H1 (cell line): ENCODE measurements at regions of chr7 and their contacts with region 1.

Region 1: DNA sequence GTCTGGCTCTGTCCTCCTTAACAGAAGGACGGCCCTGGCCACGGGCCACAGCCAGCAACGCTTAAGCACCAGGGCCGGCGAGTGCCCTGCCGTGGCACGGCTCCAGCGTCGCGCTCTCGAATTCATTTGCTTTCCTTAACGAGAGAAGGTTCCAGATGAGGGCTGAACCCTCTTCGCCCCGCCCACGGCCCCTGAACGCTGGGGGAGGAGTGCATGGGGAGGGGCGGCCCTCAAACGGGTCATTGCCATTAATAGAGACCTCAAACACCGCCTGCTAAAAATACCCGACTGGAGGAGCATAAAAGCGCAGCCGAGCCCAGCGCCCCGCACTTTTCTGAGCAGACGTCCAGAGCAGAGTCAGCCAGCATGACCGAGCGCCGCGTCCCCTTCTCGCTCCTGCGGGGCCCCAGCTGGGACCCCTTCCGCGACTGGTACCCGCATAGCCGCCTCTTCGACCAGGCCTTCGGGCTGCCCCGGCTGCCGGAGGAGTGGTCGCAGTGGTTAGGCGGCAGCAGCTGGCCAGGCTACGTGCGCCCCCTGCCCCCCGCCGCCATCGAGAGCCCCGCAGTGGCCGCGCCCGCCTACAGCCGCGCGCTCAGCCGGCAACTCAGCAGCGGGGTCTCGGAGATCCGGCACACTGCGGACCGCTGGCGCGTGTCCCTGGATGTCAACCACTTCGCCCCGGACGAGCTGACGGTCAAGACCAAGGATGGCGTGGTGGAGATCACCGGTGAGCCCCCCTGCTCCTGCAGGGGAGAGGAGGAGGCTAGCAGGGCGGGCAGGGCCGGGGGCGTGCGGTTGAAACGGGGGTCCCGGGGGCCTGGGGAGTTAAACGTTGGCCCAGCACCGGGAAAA is at the start of gene HSPB1:
- DNase-seq: peak in 1 of 2 experiments; percentile 87
- H3K4me3 ChIP-seq: peak within 1 kb of the TSS; percentile 44 to 68 (median 48)
- H3K27ac ChIP-seq: no peak within 1 kb of the TSS
- H3K4me1 ChIP-seq: peaks cover 0 to 8% (median 3%) of the 10 kb centered on the region in 4 experiments; a peak in 2 of 7 replicates
- H3K27me3 ChIP-seq: peaks cover 0 to 6% (median 4%) of the 10 kb centered on the region in 4 experiments; a peak in 3 of 7 replicates
- CTCF ChIP-seq: no peak; a peak in 1 of 4 replicates
- EP300 ChIP-seq: no peak
- POLR2A ChIP-seq: peak in 1 of 2 experiments; percentile 53; a peak in 1 of 3 replicates
- RAD21 ChIP-seq: no peak
- total RNA-seq, gene HSPB1: 165 and 194 TPM in 2 replicates

Region 2: DNA sequence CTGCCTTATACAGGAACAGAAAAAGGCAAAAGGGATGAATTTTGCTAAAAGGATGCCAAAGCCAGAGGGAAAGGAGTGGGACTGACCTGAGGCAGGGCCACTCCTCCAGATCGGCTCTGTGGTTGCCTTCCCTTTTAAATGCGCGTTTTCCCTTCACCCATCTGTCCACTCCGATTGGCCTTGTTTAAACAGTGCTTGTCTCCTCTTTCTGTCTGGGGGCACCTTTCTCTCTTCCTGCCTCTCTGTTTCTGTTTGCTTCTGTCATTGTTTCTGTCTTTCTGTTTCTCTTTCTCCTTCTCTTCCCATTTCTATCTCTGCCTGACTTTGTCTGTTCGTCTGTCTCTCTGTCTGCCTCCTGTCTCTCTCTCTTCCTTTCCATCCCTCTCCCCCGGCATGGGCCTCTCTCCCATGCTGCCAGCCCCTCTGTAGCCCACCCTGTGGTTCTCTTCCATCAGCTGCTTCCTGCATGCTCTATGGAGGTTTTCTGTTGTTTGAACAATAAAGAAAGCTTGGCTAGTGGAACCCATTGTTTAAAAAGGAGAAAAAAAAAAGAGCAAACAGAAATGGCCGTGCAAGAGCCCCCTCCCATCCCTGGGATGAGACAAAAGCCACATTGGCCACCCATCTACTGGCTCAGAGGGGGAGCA is 29.6 kb before region 1 on chr7:
- CTCF ChIA-PET with region 1: interaction called, 10 read pairs
- POLR2A ChIA-PET with region 1: interaction called, 7 read pairs
- DNase-seq: no peak
- H3K4me3 ChIP-seq: peak overlapping the region in 1 of 4 experiments; percentile 33; a peak in 3 of 8 replicates
- H3K27ac ChIP-seq: no peak overlapping the region
- H3K4me1 ChIP-seq: peaks cover 7 to 27% (median 16%) of the 10 kb centered on the region in 4 experiments
- H3K27me3 ChIP-seq: peaks cover 0 to 7% (median 0%) of the 10 kb centered on the region in 4 experiments; a peak in 2 of 7 replicates
- CTCF ChIP-seq: no peak
- EP300 ChIP-seq: no peak
- POLR2A ChIP-seq: no peak
- RAD21 ChIP-seq: no peak

Region 3: DNA sequence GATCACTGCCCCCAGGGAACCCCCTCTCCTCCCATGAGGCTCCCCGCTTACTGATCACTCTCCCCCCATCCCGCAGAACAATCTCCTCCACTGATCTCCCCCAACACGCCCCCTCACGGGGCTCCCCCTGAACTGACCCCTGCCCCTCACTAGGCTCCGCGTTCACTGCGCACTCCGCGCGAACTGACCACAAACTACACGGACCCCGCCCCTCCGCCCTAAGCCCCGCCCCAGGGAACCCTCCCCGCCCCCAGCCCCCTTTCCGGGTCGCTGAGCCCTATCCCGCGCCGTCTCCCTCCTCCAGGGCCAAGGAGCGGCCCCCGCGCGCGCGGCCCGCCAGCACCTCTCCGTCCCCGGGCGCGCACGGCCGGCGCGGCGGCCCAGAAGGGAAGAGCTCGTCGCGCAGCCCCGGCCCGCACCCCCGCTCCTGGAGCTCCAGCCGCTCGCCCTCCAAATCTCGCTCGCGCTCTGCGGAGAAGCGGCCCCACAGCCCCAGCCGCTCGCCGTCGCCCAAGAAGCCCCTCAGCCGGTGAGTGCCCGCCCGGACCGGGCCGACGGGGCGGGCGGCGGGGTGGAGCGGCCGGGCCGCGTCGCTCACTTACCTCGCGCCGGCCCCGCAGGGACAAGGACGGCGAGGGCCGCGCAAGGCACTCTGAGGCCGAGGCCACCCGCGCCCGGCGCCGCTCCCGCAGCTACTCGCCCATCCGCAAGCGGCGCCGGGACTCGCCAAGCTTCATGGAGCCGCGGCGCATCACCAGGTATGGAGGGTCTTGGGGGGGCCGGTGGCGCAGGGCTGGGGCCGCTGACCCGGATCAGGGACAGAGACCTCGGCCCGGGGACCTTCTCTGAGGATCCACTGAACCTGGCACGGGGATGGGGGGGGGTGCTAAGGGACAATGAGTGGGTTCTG is 20.0 kb before region 1 on chr7:
- CTCF ChIA-PET with region 1: interaction called, 426 read pairs
- POLR2A ChIA-PET with region 1: interaction called, 16 read pairs
- DNase-seq: peak in 1 of 2 experiments; percentile 84
- H3K4me3 ChIP-seq: peak overlapping the region; percentile 49 to 95 (median 58)
- H3K27ac ChIP-seq: no peak overlapping the region
- H3K4me1 ChIP-seq: peaks cover 0 to 13% (median 7%) of the 10 kb centered on the region in 4 experiments; a peak in 5 of 7 replicates
- H3K27me3 ChIP-seq: peaks cover 8 to 31% (median 17%) of the 10 kb centered on the region in 4 experiments
- CTCF ChIP-seq: no peak
- EP300 ChIP-seq: no peak
- POLR2A ChIP-seq: no peak
- RAD21 ChIP-seq: no peak

Region 4: GRCh38 chr7:76291343-76292212 is 11.0 kb before region 1 on chr7:
- CTCF ChIA-PET with region 1: interaction called, 426 read pairs
- POLR2A ChIA-PET with region 1: interaction called, 16 read pairs
- DNase-seq: peak; percentile 91 to 99
- H3K4me3 ChIP-seq: peak overlapping the region in 1 of 4 experiments; percentile 23; a peak in 1 of 8 replicates
- H3K27ac ChIP-seq: peak overlapping the region; percentile 53; the same call in 1 of the 2 replicates
- H3K4me1 ChIP-seq: peaks cover 0 to 22% (median 11%) of the 10 kb centered on the region in 4 experiments; a peak in 6 of 7 replicates
- H3K27me3 ChIP-seq: no peaks in the 10 kb centered on the region
- CTCF ChIP-seq: peak; percentile 94 to 99 (median 95)
- EP300 ChIP-seq: peak in 1 of 2 experiments; percentile 34; a peak in 1 of 3 replicates
- POLR2A ChIP-seq: no peak
- RAD21 ChIP-seq: peak; percentile 89 to 92